Heart right ventricle (tissue), 16 donors: ENCODE measurements at regions of chr18 and their contacts with region 1.

Region 1: GRCh38 chr18:56407646-56408045 is 230.7 kb downstream of the TXNL1 start:
- DNase-seq: no peak
- ATAC-seq: no peak
- H3K4me3 ChIP-seq: no peak overlapping the region
- H3K27ac ChIP-seq: no peak overlapping the region
- H3K4me1 ChIP-seq: peaks cover 0 to 5% (median 0%) of the 10 kb centered on the region in 9 donors
- H3K27me3 ChIP-seq: no peaks in the 10 kb centered on the region
- CTCF ChIP-seq: no peak

Region 2: DNA sequence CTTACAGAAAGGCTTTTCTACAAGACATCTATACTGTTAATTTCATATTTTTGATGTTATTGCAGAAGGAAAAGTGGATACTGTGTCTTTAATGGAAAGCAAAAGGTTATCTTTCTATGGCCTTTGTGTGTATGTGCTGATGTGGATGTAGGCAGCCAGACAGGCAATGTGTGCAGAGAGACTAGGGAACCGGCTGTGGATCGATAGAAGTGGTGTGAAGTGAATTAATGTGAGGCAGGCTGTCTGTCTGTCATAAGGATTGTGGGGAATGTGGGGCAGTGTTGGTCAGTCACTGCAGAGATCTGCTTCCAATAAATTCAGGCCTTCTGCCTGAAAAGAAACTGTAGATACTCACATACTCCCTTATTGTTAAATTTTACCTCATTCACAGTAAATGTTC is 400.3 kb after region 1 on chr18:
- intact Hi-C with region 1: no loop called
- DNase-seq: no peak
- ATAC-seq: no peak
- H3K4me3 ChIP-seq: no peak overlapping the region
- H3K27ac ChIP-seq: no peak overlapping the region
- H3K4me1 ChIP-seq: no peaks in the 10 kb centered on the region
- H3K27me3 ChIP-seq: no peaks in the 10 kb centered on the region
- CTCF ChIP-seq: no peak

Region 3: GRCh38 chr18:57376503-57376902 is 968.9 kb after region 1 on chr18:
- intact Hi-C with region 1: loop called in 1 of 10 experiments (anchors 5 kb)
- DNase-seq: no peak
- ATAC-seq: no peak
- H3K4me3 ChIP-seq: no peak overlapping the region
- H3K27ac ChIP-seq: no peak overlapping the region
- H3K4me1 ChIP-seq: no peaks in the 10 kb centered on the region
- H3K27me3 ChIP-seq: peaks cover 0 to 17% (median 0%) of the 10 kb centered on the region in 7 donors
- CTCF ChIP-seq: no peak